Aorta (tissue), 5 donors: ENCODE measurements at regions of chr4 and their contacts with region 1.

Region 1: GRCh38 chr4:9927341-9928007 is 93.8 kb downstream of the SLC2A9 start:
- DNase-seq: no peak
- ATAC-seq: no peak
- H3K4me3 ChIP-seq: no peak overlapping the region
- H3K27ac ChIP-seq: no peak overlapping the region
- H3K4me1 ChIP-seq: peaks cover 0 to 2% of the 10 kb centered on the region in 2 donors
- H3K27me3 ChIP-seq: no peaks in the 10 kb centered on the region

Region 2: GRCh38 chr4:9964879-9965278 is 37.4 kb after region 1 on chr4:
- intact Hi-C with region 1: no loop called
- DNase-seq: no peak
- ATAC-seq: no peak
- H3K4me3 ChIP-seq: no peak overlapping the region
- H3K27ac ChIP-seq: no peak overlapping the region
- H3K4me1 ChIP-seq: no peaks in the 10 kb centered on the region
- H3K27me3 ChIP-seq: no peaks in the 10 kb centered on the region

Region 3: DNA sequence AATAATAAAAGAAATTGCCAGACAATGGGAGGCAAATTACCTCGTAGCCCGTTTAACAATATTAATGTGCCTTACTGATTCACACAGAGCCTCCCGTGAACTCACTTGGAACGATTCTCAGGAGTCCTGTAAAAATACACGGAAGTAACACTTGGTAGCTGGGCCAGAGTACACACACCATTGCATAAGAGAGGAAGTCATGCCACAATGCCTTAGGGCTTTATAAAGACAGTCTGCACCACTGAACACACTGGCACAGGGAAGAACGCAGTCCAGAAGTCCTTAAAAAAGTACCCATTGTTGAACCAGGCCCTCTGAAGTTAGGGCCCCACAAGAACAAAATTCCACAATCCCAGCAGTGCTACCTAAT is 78.7 kb after region 1 on chr4:
- intact Hi-C with region 1: loop called in 1 of 2 experiments (anchors 2 kb)
- DNase-seq: peak in 1 of 2 donors; percentile 58
- ATAC-seq: peak; percentile 90
- H3K4me3 ChIP-seq: no peak overlapping the region
- H3K27ac ChIP-seq: peak overlapping the region in 1 of 2 donors; percentile 81
- H3K4me1 ChIP-seq: peaks cover 0 to 11% of the 10 kb centered on the region in 2 donors
- H3K27me3 ChIP-seq: no peaks in the 10 kb centered on the region